T-cell (primary cell): ENCODE measurements at regions of chr2 and their contacts with region 1.

Region 1: GRCh38 chr2:61694312-61695274 is 156.4 kb upstream of the XPO1 start:
- DNase-seq: peak; percentile 34 to 86 (median 67)
- ATAC-seq: peak; percentile 92 to 98 (median 94)
- H3K4me3 ChIP-seq: peak overlapping the region; percentile 93 to 94
- H3K4me3 Mint-ChIP-seq: peak overlapping the region; percentile 83 to 90 (median 86)
- H3K27ac ChIP-seq: peak overlapping the region; percentile 73
- H3K27ac Mint-ChIP-seq: peak overlapping the region; percentile 67 to 84
- H3K4me1 ChIP-seq: peaks cover 5 to 11% of the 10 kb centered on the region in 2 experiments
- H3K4me1 Mint-ChIP-seq: peaks cover 8 to 13% (median 10%) of the 10 kb centered on the region in 3 donors
- H3K27me3 ChIP-seq: no peaks in the 10 kb centered on the region
- H3K27me3 Mint-ChIP-seq: no peaks in the 10 kb centered on the region

Region 2: DNA sequence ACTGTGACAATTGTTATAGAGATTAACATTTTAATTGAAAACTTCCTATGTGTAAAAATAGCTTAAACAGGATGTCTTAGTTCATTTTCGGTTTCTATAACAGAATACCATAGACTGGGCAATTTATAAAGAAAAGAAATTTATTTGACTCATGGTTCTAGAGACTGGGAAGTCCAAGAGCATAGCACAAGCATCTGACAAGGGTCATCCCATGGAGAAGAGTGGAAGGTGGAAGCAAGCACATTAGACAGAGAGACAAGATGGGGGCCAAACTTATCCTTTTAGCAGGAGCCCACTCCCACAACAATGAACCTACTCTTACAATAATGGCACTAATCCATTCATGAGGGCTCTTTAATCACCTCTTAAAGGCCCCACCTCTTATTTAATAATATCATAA is 58.9 kb after region 1 on chr2:
- CTCF ChIA-PET with region 1: no interaction called
- POLR2A ChIA-PET with region 1: no interaction called
- DNase-seq: no peak
- ATAC-seq: no peak
- H3K4me3 ChIP-seq: no peak overlapping the region
- H3K4me3 Mint-ChIP-seq: no peak overlapping the region
- H3K27ac ChIP-seq: no peak overlapping the region
- H3K27ac Mint-ChIP-seq: no peak overlapping the region
- H3K4me1 ChIP-seq: no peaks in the 10 kb centered on the region
- H3K4me1 Mint-ChIP-seq: no peaks in the 10 kb centered on the region
- H3K27me3 ChIP-seq: peaks cover 0 to 4% of the 10 kb centered on the region in 2 experiments
- H3K27me3 Mint-ChIP-seq: no peaks in the 10 kb centered on the region

Region 3: DNA sequence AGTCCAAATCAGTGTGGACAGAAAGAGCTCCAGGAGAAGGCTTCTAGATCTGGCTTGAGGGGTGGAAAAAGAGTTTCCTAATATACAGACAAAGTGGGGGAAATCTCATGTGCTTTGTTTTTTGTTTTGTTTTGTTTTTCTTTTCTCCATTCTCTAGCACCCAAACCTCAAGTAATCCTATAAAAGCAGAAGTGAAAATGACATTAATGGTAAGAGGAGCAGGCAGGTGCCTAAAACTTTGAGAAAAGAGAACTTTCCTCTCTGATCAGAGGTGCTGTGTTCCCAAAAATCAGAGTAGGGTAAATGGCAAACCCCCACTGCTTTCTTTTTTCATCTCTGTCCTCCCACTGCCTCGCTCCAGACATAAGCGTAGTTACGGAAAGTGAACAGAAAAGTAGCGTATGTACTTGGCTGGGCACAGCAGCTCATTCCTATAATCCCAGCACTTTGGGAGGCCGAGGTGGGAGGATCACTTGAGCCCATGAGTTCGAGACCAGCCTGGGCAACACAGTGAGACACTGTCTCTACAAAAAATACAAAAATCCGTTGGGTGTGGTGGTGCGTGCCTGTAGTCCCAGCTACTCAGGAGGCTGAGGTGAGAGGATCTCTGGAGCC is 81.5 kb after region 1 on chr2:
- CTCF ChIA-PET with region 1: no interaction called
- POLR2A ChIA-PET with region 1: interaction called in 1 of 2 experiments, 13 read pairs
- DNase-seq: no peak
- ATAC-seq: no peak
- H3K4me3 ChIP-seq: no peak overlapping the region
- H3K4me3 Mint-ChIP-seq: no peak overlapping the region
- H3K27ac ChIP-seq: no peak overlapping the region
- H3K27ac Mint-ChIP-seq: peak overlapping the region in 1 of 2 donors; percentile 31
- H3K4me1 ChIP-seq: no peaks in the 10 kb centered on the region
- H3K4me1 Mint-ChIP-seq: no peaks in the 10 kb centered on the region
- H3K27me3 ChIP-seq: peaks cover 0 to 25% of the 10 kb centered on the region in 2 experiments
- H3K27me3 Mint-ChIP-seq: peaks cover 23 to 32% of the 10 kb centered on the region in 2 donors